A673 (cell line): ENCODE measurements at regions of chr16 and their contacts with region 1.

Region 1: DNA sequence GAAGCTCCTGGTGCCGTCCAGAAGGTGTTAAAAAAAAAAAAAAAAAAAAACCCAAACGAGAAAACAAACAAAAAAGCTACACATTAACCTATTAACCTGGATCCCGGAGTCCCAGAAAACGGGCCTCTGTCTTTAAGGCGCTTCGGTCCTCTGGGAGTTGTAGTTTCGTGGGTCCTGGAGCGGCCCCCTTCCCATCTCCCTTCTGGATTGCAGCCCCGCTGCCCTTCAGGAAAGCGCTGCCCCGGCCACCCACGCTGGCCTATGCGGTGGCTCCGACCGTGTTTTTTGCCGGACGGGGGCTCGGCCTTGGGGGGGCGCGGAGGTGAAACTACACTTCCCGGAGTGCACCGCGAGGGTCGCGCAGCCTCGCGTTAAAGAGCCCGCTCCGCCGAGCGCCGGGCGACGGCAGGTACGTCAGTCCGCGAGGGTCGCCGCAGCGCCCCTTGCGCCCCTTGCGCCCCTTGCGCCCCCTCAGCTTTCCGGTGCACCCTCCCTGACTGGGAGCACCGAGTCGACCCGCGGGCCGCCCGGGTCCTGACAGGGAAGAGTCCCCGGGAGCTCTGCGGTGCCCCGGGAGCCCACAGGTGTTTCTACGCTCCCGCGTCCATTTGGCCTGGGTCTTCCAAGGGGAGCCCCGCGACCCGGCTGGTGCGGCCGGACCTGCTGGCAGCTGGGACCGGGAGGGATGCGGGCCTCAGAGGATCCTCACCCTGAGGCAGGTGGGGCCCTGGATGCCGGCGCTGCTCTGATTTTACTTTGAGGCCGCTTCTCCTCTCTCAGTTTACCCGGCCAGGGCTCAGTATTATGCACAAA is at the start of gene FCSK:
- DNase-seq: peak; percentile 76
- H3K4me3 ChIP-seq: peak within 1 kb of the TSS; percentile 95
- H3K27ac ChIP-seq: peak within 1 kb of the TSS; percentile 100
- H3K4me1 ChIP-seq: peaks cover 4% of the 10 kb centered on the region
- H3K27me3 ChIP-seq: no peaks in the 10 kb centered on the region
- CTCF ChIP-seq: peak; percentile 24; the same call in 1 of the 2 replicates
- total RNA-seq, gene FCSK: 11.2 and 14.8 TPM in 2 replicates

Region 2: DNA sequence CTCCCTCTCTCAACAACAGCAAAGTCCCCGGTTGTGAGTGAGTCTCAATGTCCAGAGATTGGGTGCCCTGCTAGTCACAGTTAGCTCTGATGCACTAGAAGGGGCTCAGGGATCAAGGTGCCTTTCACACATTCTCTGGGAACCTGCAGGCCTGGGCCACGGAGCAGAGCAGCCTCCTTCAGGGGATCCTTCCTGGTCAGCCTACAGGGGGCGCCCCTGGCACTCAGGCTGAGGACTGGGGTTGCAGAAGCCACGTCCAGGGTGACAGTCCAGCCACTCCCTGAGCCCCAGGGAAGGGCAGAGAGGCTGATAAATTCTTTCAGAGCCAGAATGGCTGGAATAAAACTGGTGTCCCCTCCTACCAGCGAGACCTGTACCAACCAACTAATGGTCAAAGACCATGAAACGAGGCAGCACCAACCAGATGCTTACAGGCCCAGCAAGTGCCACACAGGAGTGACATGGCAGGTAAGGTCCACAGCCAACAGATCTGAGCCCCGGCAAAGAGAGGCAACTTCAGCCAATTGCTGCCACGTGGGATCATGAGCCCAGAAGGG is 59.0 kb before region 1 on chr16:
- CTCF ChIA-PET with region 1: interaction called, 17 read pairs
- POLR2A ChIA-PET with region 1: no interaction called
- intact Hi-C with region 1: no loop called
- DNase-seq: peak; percentile 33
- H3K4me3 ChIP-seq: no peak overlapping the region
- H3K27ac ChIP-seq: no peak overlapping the region
- H3K4me1 ChIP-seq: no peaks in the 10 kb centered on the region
- H3K27me3 ChIP-seq: no peaks in the 10 kb centered on the region
- CTCF ChIP-seq: peak; percentile 83

Region 3: GRCh38 chr16:70438969-70439862 is 15.2 kb before region 1 on chr16 and contains the start of gene ST3GAL2:
- CTCF ChIA-PET with region 1: interaction called, 12 read pairs
- POLR2A ChIA-PET with region 1: interaction called, 4 read pairs
- intact Hi-C with region 1: no loop called
- DNase-seq: peak; percentile 99
- H3K4me3 ChIP-seq: peak within 1 kb of the TSS; percentile 73
- H3K27ac ChIP-seq: peak within 1 kb of the TSS; percentile 63
- H3K4me1 ChIP-seq: peaks cover 16% of the 10 kb centered on the region
- H3K27me3 ChIP-seq: no peaks in the 10 kb centered on the region
- CTCF ChIP-seq: no peak
- total RNA-seq, gene ST3GAL2: 26.5 and 29.0 TPM in 2 replicates